ENCODE measurements at regions of chr13 and their contacts with region 1.

Region 1: GRCh38 chr13:97109841-97110492 is 112.2 kb upstream of the MBNL2 start:
- DNase-seq: no peak
- ATAC-seq: peak; percentile 99
- H3K4me3 ChIP-seq: no peak overlapping the region
- H3K27ac ChIP-seq: no peak overlapping the region
- H3K4me1 ChIP-seq: no peaks in the 10 kb centered on the region
- H3K27me3 ChIP-seq: no peaks in the 10 kb centered on the region
- CTCF ChIP-seq: peak; percentile 91 to 96 (median 95)
- EP300 ChIP-seq: no peak
- POLR2A ChIP-seq: no peak
- RAD21 ChIP-seq: peak; percentile 94

Region 2: GRCh38 chr13:97141564-97142005 is 31.6 kb after region 1 on chr13:
- CTCF ChIA-PET with region 1: interaction called, 23 read pairs
- POLR2A ChIA-PET with region 1: no interaction called
- RAD21 ChIA-PET with region 1: interaction called, 3 read pairs
- SMC1A ChIA-PET with region 1: interaction called, 3 read pairs
- in situ Hi-C with region 1: no loop called
- intact Hi-C with region 1: no loop called
- DNase-seq: peak; percentile 23
- ATAC-seq: peak; percentile 91
- H3K4me3 ChIP-seq: no peak overlapping the region
- H3K27ac ChIP-seq: no peak overlapping the region
- H3K4me1 ChIP-seq: no peaks in the 10 kb centered on the region
- H3K27me3 ChIP-seq: no peaks in the 10 kb centered on the region
- CTCF ChIP-seq: no peak
- EP300 ChIP-seq: no peak
- POLR2A ChIP-seq: no peak
- RAD21 ChIP-seq: no peak

Region 3: DNA sequence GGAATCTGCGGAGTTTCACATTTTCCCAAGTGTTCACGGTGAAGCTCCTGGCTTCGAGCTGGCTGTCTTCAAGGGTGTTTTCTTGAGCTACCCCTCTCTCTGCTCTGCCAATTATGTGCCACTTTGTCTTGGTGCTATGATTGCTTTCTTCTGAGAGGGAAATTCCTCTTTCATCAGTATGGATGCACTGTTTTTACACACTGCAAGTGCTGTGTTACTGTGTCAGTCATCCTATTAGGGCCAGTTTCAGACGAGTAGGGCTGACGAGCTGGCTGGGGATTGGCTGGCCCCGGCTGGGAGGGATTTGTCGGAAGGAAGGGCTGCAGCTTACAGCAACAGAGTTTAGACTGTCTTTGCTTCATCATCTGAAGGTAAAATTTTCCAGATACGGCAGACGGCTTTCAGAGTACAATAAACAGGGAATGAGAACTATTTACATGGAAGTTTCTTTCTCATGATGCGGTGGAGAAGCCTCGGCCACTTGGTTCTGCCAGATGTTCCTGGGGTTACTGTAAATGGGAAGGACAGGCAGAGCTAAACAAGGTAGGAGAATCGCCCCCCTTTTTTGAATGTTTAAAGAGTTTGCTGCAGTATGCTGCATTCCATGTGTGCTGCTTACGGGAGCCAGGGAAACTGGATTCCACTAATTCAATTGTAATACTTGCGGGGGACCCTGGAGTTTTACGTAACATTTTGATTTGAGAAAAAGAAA is 112.2 kb after region 1 on chr13 and contains the start of gene MBNL2:
- CTCF ChIA-PET with region 1: interaction called, 6 read pairs
- POLR2A ChIA-PET with region 1: interaction called, 4 read pairs
- RAD21 ChIA-PET with region 1: interaction called, 18 read pairs
- SMC1A ChIA-PET with region 1: interaction called, 21 read pairs
- in situ Hi-C with region 1: no loop called
- intact Hi-C with region 1: no loop called
- DNase-seq: peak; percentile 77
- ATAC-seq: peak; percentile 92
- H3K4me3 ChIP-seq: peak within 1 kb of the TSS; percentile 70
- H3K27ac ChIP-seq: peak within 1 kb of the TSS; percentile 76
- H3K4me1 ChIP-seq: peaks cover 7% of the 10 kb centered on the region; the same call in 1 of the 2 replicates
- H3K27me3 ChIP-seq: no peaks in the 10 kb centered on the region
- CTCF ChIP-seq: no peak
- EP300 ChIP-seq: 0 out of 4 replicates have a peak, but pooled peaks of 1 of the 2 experiments have one; percentile 15
- POLR2A ChIP-seq: peak; percentile 56
- RAD21 ChIP-seq: no peak
- polyA plus RNA-seq, gene MBNL2: 1.6 to 2.1 TPM

Region 4: DNA sequence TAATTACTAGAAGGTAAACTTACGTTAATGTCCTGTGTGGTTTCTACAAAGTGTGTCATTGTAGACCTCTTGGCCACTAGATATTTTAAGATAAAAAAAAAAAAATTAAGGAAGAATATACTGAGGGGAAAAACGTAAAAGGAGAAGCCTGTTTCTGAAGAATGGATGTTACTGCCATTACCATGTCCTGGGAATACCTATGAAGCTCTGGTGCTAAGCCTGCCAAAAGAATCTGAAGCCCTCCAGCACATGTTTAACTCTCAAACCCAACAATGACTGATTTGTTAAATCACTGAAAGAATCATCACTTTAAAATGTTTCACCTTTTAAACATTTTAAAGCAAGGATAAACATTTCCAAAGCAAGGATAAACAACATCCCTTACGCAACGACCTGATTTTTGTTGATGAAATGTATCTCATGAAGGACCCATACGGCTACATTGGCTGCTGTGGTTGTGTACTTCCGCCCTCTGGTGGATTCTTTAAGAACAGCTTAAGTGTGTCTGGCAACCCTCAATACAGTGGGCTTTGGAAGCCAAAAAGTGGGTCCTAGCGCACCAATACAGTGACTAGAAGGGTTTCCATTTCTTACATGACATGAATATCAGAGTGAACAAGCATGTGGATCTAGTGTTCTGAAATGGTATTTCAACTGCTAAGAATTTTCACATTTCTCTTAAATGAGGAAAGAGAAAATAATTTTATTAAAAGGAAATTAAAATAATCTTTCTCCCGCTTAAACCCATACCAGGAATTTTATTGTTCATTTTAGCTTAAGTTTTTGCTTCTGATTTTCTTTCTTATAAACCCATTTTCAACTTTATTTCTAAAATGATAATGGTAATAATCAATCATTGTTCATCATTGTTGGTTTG is 249.5 kb after region 1 on chr13:
- CTCF ChIA-PET with region 1: interaction called, 135 read pairs
- POLR2A ChIA-PET with region 1: interaction called, 3 read pairs
- RAD21 ChIA-PET with region 1: interaction called, 74 read pairs
- SMC1A ChIA-PET with region 1: interaction called, 99 read pairs
- in situ Hi-C with region 1: loop called (anchors 5 kb)
- intact Hi-C with region 1: loop called (anchors 1 kb)
- DNase-seq: no peak
- ATAC-seq: peak; percentile 100
- H3K4me3 ChIP-seq: no peak overlapping the region
- H3K27ac ChIP-seq: no peak overlapping the region
- H3K4me1 ChIP-seq: no peaks in the 10 kb centered on the region
- H3K27me3 ChIP-seq: no peaks in the 10 kb centered on the region
- CTCF ChIP-seq: peak; percentile 77 to 84 (median 83)
- EP300 ChIP-seq: no peak
- POLR2A ChIP-seq: no peak
- RAD21 ChIP-seq: peak; percentile 90

Region 5: DNA sequence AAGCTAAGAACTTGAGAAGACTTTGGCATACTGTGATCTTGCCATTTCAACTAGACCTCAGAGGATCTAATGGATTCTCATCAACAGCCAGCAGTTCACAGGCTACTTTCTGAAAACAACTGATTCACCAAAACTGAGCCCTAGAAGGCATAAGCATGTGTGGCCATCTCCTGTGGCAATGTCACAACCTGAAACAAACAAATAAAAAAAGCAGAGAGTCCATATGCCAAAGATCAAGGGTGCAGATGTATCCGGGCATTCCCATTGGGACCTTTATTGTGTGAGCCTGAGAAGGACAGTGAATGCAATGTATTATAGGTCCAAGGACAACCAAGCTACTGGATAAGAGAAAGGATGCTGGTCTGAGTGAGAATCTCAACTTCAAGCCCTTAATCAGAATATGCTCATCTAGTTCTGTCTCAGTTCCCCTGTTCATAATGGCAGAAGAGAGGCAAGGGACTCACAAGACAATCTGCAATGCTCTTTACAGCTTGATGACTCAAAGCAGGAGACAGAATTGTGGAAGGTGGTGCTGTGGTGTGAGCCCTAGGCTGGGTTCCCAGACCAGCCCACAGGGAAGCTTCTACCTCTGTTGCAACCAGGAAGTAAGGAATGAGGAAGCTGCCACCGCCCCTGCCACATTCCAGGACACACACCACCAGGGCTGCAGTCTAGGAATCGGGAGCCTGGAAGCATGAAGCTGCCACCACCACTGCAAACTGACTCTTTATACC is 457.7 kb after region 1 on chr13:
- CTCF ChIA-PET with region 1: interaction called, 10 read pairs
- POLR2A ChIA-PET with region 1: no interaction called
- RAD21 ChIA-PET with region 1: interaction called, 4 read pairs
- SMC1A ChIA-PET with region 1: interaction called, 4 read pairs
- in situ Hi-C with region 1: no loop called
- intact Hi-C with region 1: loop called (anchors 10 kb)
- DNase-seq: peak; percentile 37
- ATAC-seq: peak; percentile 92
- H3K4me3 ChIP-seq: no peak overlapping the region
- H3K27ac ChIP-seq: no peak overlapping the region
- H3K4me1 ChIP-seq: no peaks in the 10 kb centered on the region
- H3K27me3 ChIP-seq: no peaks in the 10 kb centered on the region
- CTCF ChIP-seq: no peak
- EP300 ChIP-seq: no peak; a peak in 1 of 4 replicates
- POLR2A ChIP-seq: no peak
- RAD21 ChIP-seq: no peak

Region 6: GRCh38 chr13:97798836-97799235 is 688.9 kb after region 1 on chr13:
- CTCF ChIA-PET with region 1: interaction called, 10 read pairs
- POLR2A ChIA-PET with region 1: no interaction called
- RAD21 ChIA-PET with region 1: interaction called, 5 read pairs
- SMC1A ChIA-PET with region 1: no interaction called
- in situ Hi-C with region 1: no loop called
- intact Hi-C with region 1: loop called (anchors 10 kb)
- DNase-seq: no peak
- ATAC-seq: no peak
- H3K4me3 ChIP-seq: no peak overlapping the region
- H3K27ac ChIP-seq: no peak overlapping the region
- H3K4me1 ChIP-seq: no peaks in the 10 kb centered on the region
- H3K27me3 ChIP-seq: no peaks in the 10 kb centered on the region
- CTCF ChIP-seq: no peak
- EP300 ChIP-seq: no peak
- POLR2A ChIP-seq: no peak
- RAD21 ChIP-seq: no peak

Measured in GM12878 (cell line).